Stomach (tissue), 19 donors: ENCODE measurements at regions of chr11 and their contacts with region 1.

Region 1: DNA sequence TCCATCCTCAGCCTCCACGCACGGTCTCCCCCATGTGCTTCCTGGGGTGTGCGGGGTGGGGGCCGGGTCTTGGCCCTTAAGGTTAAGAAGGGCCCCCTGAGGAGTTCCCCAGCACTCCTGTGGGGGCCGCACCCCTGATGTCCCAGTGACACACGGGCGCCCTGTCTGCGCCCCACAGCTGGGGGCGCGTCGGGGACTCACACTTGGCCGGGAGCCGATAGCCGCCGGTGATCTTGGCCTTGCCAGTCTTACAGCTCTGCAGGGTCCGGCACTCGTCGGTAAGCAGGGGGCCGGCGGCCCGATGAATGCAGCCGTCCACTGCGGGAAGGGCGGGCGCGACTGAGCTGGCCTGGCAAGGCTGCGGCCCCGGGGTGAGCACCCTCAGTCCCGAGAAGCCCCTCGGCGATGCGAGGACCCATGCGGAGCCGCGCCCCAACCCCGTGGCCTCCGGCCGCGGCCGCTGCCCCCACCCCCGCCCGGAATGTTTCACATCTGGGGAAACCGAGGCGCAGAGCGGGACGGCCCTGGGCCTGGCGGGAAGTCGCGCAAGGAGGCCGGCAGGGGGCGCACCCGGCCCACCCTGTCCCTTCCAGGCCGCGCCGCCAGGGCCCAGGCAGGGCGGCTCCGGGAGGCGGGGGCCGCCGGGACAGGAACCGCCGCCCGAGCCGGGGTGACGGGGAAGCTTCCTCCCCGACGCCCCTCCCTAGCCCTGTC is 13.9 kb downstream of the OTUB1 start:
- DNase-seq: peak; percentile 80 to 94
- H3K4me3 ChIP-seq: peak overlapping the region; percentile 19 to 48 (median 40)
- H3K27ac ChIP-seq: peak overlapping the region in 1 of 5 donors; percentile 16
- H3K4me1 ChIP-seq: peaks cover 29 to 43% (median 32%) of the 10 kb centered on the region in 4 donors
- H3K27me3 ChIP-seq: peaks cover 0 to 26% (median 0%) of the 10 kb centered on the region in 3 donors
- CTCF ChIP-seq: peak in 5 of 7 experiments; percentile 14 to 92 (median 74)
- EP300 ChIP-seq: no peak
- POLR2A ChIP-seq: no peak

Region 2: GRCh38 chr11:64148200-64148916 is 148.2 kb after region 1 on chr11:
- intact Hi-C with region 1: loop called (anchors 2 kb)
- DNase-seq: peak; percentile 82 to 93
- H3K4me3 ChIP-seq: peak overlapping the region; percentile 10 to 31 (median 21)
- H3K27ac ChIP-seq: peak overlapping the region in 1 of 5 donors; percentile 76
- H3K4me1 ChIP-seq: peaks cover 14 to 48% (median 32%) of the 10 kb centered on the region in 4 donors
- H3K27me3 ChIP-seq: no peaks in the 10 kb centered on the region
- CTCF ChIP-seq: peak in 5 of 7 experiments; percentile 82 to 94 (median 91)
- EP300 ChIP-seq: no peak
- POLR2A ChIP-seq: no peak